Activated CD4-positive, alpha-beta memory T cell treated with anti-CD3 and anti-CD28 coated beads for 36 hours (primary cell): ENCODE measurements at regions of chr12 and their contacts with region 1.

Region 1: DNA sequence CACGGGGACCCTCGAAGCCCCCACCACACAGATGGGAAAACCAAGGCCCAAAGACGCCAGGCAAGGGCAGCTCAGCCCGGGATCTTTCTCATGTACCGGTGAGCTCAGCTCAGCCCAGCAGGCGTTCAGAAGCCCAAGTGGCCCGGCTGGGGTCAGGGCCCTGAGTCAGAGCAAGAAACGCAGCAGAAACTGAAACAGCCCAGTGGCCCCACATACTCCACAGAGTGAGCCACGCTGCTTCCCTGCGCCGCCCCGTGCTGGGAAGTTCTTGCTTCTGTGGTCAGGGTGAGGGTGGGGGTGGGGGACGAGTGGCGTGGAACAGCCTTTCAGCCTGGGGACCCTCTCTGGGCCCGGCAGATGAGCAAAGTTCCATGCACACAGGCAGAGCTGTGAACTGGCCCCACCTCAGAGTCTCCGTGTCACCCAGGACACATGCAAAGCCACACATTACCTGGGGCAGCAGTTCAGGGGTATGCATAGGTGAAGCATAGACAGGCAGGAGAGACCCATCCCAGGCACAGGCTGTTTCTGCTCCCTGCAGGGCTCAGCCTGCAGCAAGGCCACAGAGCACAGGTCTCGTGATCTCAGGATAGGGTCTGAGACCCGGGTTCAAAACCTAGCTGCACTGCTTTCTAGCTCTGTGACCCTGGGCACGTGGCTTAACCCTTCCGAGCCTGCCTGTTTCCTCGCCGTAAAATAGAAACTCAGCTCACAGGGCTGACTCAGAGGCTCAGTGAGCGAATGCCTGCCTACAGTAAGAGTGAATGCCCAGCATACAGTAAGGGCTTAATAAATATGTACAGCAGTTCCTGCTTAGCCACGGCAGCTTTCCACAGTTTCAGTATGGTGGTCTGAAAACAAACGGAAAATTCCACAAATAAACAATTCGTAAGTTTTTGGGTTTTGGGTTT is 21.6 kb downstream of the NCOR2 start:
- DNase-seq: peak; percentile 85
- H3K4me3 Mint-ChIP-seq: no peak overlapping the region
- H3K27ac Mint-ChIP-seq: peak overlapping the region; percentile 70
- H3K4me1 Mint-ChIP-seq: peaks cover 72% of the 10 kb centered on the region
- H3K27me3 Mint-ChIP-seq: no peaks in the 10 kb centered on the region

Region 2: DNA sequence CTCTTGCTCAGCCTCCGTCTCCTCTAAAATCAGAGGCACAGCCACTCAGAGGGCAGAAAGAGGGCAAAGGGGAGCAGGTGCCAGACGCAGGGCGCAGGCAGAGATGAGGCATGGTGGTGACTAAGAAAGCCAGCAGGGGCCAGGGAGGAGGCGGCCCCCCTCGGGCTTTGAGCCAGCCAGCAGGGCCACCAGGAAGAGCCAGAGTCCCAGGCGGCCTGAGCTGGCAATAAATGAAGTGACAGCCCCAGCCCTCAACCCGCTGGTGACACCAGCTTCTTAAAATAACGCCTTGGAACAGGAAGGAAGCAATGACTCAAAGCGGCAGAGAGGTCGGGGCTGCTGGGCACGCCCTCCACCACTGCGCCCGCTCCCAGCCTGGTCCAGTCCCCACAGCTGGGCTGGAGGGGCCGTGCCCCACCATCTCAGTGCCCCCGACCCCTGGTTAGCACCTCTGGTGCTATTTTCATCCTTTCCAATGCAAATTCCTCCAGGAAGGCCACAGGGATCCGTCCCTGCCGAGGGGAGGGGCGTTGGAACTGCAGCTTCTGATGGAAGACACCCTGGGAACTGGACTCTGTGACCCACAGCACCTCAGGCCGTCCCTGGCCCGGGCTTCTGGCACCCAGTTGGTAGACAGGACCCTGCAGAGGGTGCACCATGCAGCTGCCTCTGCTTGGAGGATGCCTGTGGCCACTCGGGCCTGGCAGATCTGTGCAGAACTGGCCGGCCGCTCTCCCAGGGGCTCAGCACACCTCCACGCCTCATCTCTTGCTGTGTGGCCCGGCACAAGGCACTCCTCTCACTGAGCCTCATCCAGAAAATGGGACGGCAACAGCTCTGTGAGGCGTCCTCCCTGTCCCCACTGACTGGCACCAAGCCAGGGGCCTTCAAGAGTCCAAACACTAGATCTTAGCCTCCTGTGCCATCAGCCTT is 92.1 kb before region 1 on chr12:
- CTCF ChIA-PET with region 1: interaction called, 7 read pairs
- POLR2A ChIA-PET with region 1: no interaction called
- intact Hi-C with region 1: loop called (anchors 1 kb)
- DNase-seq: peak; percentile 94
- H3K4me3 Mint-ChIP-seq: peak overlapping the region; percentile 12
- H3K27ac Mint-ChIP-seq: peak overlapping the region; percentile 54
- H3K4me1 Mint-ChIP-seq: peaks cover 52% of the 10 kb centered on the region
- H3K27me3 Mint-ChIP-seq: no peaks in the 10 kb centered on the region

Region 3: GRCh38 chr12:124480469-124481256 is 65.1 kb before region 1 on chr12:
- CTCF ChIA-PET with region 1: no interaction called
- POLR2A ChIA-PET with region 1: interaction called, 5 read pairs
- intact Hi-C with region 1: loop called (anchors 5 kb)
- DNase-seq: peak; percentile 77
- H3K4me3 Mint-ChIP-seq: no peak overlapping the region
- H3K27ac Mint-ChIP-seq: peak overlapping the region; percentile 28
- H3K4me1 Mint-ChIP-seq: peaks cover 40% of the 10 kb centered on the region
- H3K27me3 Mint-ChIP-seq: no peaks in the 10 kb centered on the region

Region 4: DNA sequence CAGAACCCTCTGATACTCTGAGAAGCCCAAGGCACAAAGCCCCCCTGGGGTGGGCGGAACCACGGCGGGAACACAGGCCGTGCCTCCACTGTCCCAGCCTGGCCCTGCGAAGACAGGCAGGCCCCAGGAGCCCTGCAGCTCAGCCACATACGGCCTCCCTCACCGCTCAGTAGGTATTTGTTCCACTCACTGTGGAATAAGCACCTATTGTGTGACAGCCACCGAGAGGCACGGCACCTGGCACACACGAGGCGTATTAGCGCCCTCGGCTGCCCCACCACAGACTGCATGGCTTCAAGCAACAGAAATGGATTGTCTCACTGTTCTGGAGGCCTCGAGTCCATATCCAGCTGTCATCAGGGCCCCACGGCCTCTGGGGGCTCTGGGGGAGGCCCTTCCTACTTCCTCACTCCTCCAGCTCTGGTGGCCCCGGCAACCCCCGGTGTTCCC is 44.6 kb before region 1 on chr12:
- CTCF ChIA-PET with region 1: no interaction called
- POLR2A ChIA-PET with region 1: no interaction called
- intact Hi-C with region 1: no loop called
- DNase-seq: no peak
- H3K4me3 Mint-ChIP-seq: no peak overlapping the region
- H3K27ac Mint-ChIP-seq: no peak overlapping the region
- H3K4me1 Mint-ChIP-seq: peaks cover 38% of the 10 kb centered on the region
- H3K27me3 Mint-ChIP-seq: no peaks in the 10 kb centered on the region